ENCODE measurements at regions of chr5 and their contacts with region 1.

Region 1: GRCh38 chr5:141032626-141033025 is 18.5 kb upstream of the PCDHB1 start:
- DNase-seq: no peak

Region 2: DNA sequence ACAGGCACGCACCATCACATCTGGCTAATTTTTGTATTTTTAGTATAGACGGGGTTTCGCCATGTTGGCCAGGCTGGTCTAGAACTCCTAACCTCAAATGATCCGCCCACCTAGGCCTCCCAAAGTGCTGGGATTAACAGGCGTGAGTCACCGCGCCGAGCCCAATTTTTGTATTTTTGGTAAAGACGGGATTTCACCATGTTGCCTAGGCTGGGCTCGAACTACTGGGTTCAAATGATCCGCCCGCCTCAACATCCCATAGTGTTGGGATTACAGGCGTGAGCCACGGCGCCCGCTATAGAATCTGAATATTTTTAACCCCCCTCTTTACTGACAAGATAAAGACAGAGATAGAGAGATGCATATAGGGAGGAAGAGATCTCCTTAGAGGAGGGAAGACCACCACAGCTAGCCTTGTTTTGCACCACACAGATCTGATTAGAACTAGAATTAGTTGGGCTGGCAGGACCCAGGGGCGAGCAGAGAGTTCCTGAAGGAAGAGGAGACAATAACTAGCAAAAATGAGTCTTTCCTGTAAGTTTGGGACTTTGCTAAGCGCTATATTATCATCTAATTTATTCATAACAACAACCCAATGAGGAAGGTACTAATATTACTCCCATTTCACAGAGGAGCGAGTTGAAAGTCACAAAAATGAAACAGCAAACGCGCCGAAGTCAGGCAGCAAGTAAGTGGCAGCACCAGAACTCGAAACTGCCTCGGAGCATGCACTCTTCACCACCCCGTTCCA is 632.5 kb before region 1 on chr5:
- intact Hi-C with region 1: no loop called
- DNase-seq: peak in 1 of 42 donors; percentile 45

Region 3: DNA sequence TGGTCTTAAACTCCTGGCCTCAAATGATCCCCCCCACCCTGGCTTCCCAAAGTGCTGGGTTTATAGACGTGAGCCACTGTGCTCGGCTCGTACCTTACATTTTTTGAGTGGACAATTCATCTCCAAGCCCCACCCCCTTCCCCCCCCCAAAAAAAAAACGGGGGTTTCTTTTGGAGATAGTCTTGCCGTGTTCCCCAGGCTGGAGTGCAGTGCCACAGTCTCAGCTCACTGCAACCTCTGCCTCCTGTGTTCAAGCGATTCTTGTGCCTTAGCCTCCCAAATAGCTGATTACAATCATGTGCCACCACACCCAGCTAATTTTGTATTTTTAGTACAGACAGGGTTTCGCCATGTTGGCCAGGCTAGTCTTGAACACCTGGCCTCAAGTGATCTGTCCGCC is 599.7 kb before region 1 on chr5:
- intact Hi-C with region 1: no loop called
- DNase-seq: no peak

Region 4: DNA sequence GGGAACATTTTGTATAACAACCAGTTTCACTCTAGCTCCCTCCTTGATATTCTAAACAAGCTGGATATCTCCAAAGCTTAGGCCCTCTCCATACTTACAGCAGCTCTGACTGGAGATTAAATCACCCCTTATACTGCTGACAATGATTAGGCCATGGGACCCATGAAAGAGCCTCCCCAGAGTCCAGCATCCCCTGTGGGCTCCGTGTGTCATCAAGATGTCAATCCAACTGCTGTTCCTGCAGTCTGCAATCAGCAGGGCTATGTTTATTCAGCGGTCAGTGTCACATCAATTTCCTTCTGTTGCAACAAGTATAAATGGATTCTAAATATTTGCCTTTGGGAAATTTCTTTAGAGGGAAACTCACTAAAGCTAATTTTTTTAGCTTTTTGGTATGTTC is 39.8 kb before region 1 on chr5:
- intact Hi-C with region 1: loop called (anchors 5 kb)
- DNase-seq: no peak